ENCODE measurements at regions of chr15 and their contacts with region 1.

Region 1: GRCh38 chr15:64731012-64731806 is 44.2 kb downstream of the RBPMS2 start:
- DNase-seq: peak; percentile 91
- H3K4me3 ChIP-seq: no peak overlapping the region
- H3K27ac ChIP-seq: no peak overlapping the region
- H3K4me1 ChIP-seq: no peaks in the 10 kb centered on the region
- H3K27me3 ChIP-seq: no peaks in the 10 kb centered on the region
- CTCF ChIP-seq: peak; percentile 86

Region 2: GRCh38 chr15:64656508-64656907 is 74.7 kb before region 1 on chr15:
- intact Hi-C with region 1: no loop called
- DNase-seq: no peak
- H3K4me3 ChIP-seq: no peak overlapping the region
- H3K27ac ChIP-seq: no peak overlapping the region
- H3K4me1 ChIP-seq: no peaks in the 10 kb centered on the region
- H3K27me3 ChIP-seq: no peaks in the 10 kb centered on the region
- CTCF ChIP-seq: no peak

Region 3: GRCh38 chr15:64681424-64682024 is 49.7 kb before region 1 on chr15:
- intact Hi-C with region 1: loop called (anchors 2 kb)
- DNase-seq: peak; percentile 44
- H3K4me3 ChIP-seq: no peak overlapping the region
- H3K27ac ChIP-seq: no peak overlapping the region
- H3K4me1 ChIP-seq: no peaks in the 10 kb centered on the region
- H3K27me3 ChIP-seq: no peaks in the 10 kb centered on the region
- CTCF ChIP-seq: peak; percentile 64

Region 4: DNA sequence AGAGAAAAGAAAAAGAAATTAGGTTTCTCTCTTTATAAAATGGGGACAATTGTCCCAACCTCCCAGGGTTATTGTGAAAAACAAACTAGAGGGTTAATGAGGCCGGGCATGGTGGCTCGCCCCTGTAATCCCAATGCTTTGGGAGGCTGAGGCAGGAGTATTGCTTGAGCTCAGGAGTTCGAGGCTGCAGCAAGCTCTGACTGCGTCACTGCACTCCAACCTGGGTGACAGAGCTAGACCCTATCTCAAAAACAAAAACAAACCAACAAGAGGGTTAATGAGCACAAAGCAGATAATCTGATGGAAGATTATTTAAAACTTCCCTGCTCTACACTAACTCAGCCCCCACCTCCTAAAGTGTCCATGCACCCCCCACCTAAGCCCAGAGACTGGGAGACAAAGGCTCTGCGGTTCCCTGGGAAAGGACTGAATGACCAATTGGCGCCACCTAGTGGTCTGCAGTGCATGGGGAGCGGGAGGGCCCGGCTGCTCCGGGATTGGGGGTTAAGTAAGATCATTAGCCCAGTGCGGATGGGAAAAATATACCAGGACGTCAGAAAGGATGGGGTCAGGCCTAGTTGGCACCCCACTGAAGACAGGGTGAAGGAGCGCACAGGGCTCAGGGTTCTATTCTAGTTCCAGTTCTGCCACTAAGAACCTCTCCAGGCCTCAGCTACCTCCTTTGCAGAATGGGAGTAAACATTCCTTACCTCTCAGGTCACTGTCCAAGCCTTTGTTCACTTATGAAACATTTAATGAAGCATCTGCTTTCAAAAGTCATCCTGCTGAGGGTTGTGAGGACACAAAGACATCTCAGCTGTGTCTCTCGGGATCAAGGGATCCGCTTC is 78.7 kb after region 1 on chr15:
- intact Hi-C with region 1: loop called (anchors 2 kb)
- DNase-seq: peak; percentile 83
- H3K4me3 ChIP-seq: no peak overlapping the region
- H3K27ac ChIP-seq: no peak overlapping the region
- H3K4me1 ChIP-seq: no peaks in the 10 kb centered on the region
- H3K27me3 ChIP-seq: no peaks in the 10 kb centered on the region
- CTCF ChIP-seq: peak; percentile 90

Region 5: DNA sequence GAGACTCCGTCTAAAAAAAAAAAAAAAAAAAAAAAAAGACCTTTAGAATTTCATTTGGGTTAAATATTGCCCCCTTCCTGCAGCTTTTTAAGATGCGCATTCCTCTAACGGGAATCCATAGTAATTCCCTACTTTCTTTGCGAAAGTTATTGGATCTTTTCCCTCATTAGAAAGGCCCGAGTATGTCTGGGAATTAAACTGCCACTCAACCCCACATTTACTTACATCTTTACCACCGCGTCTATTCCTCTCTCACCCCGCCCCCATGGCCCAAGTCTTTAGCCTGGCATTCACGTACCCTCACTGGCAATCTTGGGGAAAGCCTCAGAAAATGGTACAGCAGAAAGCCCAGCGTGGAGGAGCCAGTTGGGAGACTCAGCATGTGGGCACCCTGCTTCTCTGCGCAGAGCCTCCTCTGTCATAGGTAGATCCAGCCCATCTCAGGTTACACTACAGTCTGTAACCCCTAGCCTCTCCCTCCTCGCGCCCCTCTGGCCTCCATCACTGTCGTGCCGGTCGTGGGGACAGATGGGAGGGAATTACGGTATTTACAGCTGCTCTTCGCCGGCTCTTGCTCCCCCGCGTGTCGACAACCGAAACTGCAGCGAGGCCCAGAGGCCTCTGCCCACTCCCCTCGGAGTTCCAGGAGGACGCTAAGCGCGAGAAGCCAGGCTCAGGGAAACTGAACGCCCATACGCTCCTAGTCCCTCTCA is 174.1 kb after region 1 on chr15:
- intact Hi-C with region 1: loop called (anchors 5 kb)
- DNase-seq: peak; percentile 80
- H3K4me3 ChIP-seq: peak overlapping the region; percentile 21
- H3K27ac ChIP-seq: no peak overlapping the region
- H3K4me1 ChIP-seq: no peaks in the 10 kb centered on the region
- H3K27me3 ChIP-seq: no peaks in the 10 kb centered on the region
- CTCF ChIP-seq: peak; percentile 73